Activated B cell treated with CpG ODN at 0.5 μM for 24 hours (primary cell): ENCODE measurements at regions of chr17 and their contacts with region 1.

Region 1: GRCh38 chr17:75412455-75413317 is 7.2 kb upstream of the GRB2 start:
- DNase-seq: peak; percentile 63
- ATAC-seq: peak; percentile 94
- H3K4me3 Mint-ChIP-seq: peak overlapping the region; percentile 53
- H3K27ac Mint-ChIP-seq: peak overlapping the region; percentile 63
- H3K4me1 Mint-ChIP-seq: peaks cover 12% of the 10 kb centered on the region
- H3K27me3 Mint-ChIP-seq: no peaks in the 10 kb centered on the region
- CTCF ChIP-seq: peak; percentile 9

Region 2: DNA sequence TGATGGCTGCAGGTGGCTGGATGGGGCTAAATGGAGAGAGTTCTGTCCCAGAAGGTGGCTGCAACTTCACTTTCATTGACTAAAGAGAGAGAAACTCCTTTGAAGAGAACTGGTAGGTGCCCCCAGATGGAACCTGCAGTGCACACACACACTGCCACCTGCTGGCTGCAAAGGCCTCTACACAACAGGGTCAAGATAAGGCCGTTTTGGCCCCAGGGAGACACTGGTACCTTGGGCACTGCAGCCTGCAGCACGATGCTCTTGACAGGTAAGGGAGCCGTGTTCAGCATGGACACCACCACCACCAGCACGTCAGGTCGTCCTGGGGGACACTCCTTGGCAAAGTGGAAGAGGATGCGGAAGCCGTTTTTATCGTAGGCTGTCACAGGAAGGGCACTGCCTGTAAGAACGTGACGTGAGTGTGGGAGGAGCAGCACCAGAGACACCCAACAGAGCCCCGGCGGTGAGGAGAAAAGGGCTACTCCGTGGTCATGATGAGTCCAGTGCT is 173.9 kb before region 1 on chr17:
- CTCF ChIA-PET with region 1: interaction called, 4 read pairs
- POLR2A ChIA-PET with region 1: interaction called, 5 read pairs
- intact Hi-C with region 1: loop called (anchors 1 kb)
- DNase-seq: peak; percentile 53
- ATAC-seq: peak; percentile 72
- H3K4me3 Mint-ChIP-seq: peak overlapping the region; percentile 57
- H3K27ac Mint-ChIP-seq: peak overlapping the region; percentile 83
- H3K4me1 Mint-ChIP-seq: peaks cover 35% of the 10 kb centered on the region
- H3K27me3 Mint-ChIP-seq: no peaks in the 10 kb centered on the region
- CTCF ChIP-seq: no peak

Region 3: GRCh38 chr17:75313941-75314551 is 98.6 kb before region 1 on chr17:
- CTCF ChIA-PET with region 1: interaction called, 4 read pairs
- POLR2A ChIA-PET with region 1: interaction called, 10 read pairs
- intact Hi-C with region 1: no loop called
- DNase-seq: no peak
- ATAC-seq: peak; percentile 42
- H3K4me3 Mint-ChIP-seq: no peak overlapping the region
- H3K27ac Mint-ChIP-seq: peak overlapping the region; percentile 89
- H3K4me1 Mint-ChIP-seq: peaks cover 77% of the 10 kb centered on the region
- H3K27me3 Mint-ChIP-seq: no peaks in the 10 kb centered on the region
- CTCF ChIP-seq: no peak

Region 4: DNA sequence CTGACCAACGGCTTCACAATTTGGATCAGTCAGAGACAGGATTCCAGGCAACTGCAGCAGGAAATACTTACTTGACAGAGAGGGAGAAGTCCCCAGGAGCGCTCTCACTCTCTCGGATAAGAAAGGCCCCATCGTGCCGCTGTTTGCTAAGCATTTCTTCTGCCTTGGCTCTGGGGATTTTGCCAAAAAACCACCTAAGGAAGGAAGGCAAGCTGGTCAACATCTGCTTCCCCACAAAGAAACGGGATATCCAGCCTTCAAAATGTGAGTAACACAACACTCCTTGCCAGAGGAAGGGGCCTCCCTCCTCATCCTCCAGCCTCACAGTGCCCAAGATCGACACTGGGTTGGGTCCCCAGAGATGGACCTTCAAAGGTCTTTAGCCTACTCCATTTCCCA is 86.9 kb before region 1 on chr17:
- CTCF ChIA-PET with region 1: interaction called, 53 read pairs
- POLR2A ChIA-PET with region 1: interaction called, 101 read pairs
- intact Hi-C with region 1: loop called (anchors 1 kb)
- DNase-seq: no peak
- ATAC-seq: no peak
- H3K4me3 Mint-ChIP-seq: peak overlapping the region; percentile 57
- H3K27ac Mint-ChIP-seq: peak overlapping the region; percentile 88
- H3K4me1 Mint-ChIP-seq: peaks cover 82% of the 10 kb centered on the region
- H3K27me3 Mint-ChIP-seq: no peaks in the 10 kb centered on the region
- CTCF ChIP-seq: no peak